HEK293 (cell line): ENCODE measurements at regions of chr2 and their contacts with region 1.

Region 1: DNA sequence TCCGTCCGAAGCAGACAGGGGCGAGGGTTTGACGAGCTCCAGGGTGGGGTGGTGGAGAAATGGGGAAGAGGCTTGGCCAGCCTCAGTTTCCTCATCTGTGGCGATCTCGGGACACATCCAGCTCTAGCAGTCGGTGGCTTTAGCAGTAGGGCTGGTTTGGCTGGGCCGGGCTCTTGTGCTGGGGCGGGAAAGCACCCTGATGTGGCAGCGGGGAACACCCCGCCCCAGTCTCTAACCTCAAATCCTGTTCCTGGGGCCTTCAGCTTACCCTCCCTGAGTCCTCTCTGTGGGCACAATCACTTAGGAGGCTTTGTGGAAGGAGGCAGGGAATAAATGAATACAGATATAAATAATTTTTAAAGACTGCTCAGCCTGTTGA is 26.5 kb upstream of the MCFD2 start:
- H3K4me3 ChIP-seq: peak overlapping the region; percentile 84
- H3K27ac ChIP-seq: peak overlapping the region; percentile 82; the same call in 1 of the 2 replicates
- H3K4me1 ChIP-seq: peaks cover 3% of the 10 kb centered on the region
- CTCF ChIP-seq: no peak

Region 2: DNA sequence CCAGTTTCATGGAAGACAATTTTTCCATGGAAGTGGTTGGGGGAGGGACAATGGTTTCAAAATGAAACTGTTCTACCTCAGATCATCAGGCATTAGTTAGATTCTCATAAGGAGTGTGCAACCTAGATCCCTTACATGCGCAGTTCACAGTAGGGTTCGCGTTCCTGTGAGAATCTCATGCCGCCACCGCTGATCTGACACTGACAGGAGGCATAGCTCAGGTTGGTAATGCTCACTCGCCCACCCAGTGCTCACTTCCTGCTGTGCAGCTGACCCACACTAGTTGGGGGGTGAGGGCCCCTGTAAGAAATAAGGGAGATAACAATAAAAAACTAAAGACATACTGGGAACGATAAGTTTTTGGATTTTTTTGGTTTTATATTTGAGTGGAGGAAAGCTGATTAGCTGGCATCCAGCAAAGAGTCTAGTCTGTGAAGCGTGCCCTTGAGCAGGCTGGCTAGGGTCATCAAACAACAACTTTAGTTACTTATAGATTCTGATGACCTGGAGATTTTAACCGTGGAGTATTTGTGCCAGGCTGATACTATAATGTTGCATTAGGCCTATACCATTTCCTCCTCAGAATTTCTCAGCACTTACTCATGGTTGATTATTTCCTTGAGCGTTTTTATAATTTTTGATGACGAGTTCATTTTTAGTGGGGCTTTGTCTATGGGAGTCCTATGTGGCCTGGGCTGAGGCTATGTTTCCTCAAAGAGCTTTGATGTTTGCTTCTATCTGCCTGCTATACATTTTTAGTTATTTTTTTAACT is 20.3 kb before region 1 on chr2:
- CTCF ChIA-PET with region 1: interaction called, 29 read pairs
- POLR2A ChIA-PET with region 1: no interaction called
- H3K4me3 ChIP-seq: no peak overlapping the region
- H3K27ac ChIP-seq: no peak overlapping the region
- H3K4me1 ChIP-seq: no peaks in the 10 kb centered on the region
- CTCF ChIP-seq: no peak